ENCODE measurements at regions of chr10 and their contacts with region 1.

Region 1: GRCh38 chr10:97731346-97732051 is 5.4 kb upstream of the ZFYVE27 start:
- DNase-seq: no peak

Region 2: DNA sequence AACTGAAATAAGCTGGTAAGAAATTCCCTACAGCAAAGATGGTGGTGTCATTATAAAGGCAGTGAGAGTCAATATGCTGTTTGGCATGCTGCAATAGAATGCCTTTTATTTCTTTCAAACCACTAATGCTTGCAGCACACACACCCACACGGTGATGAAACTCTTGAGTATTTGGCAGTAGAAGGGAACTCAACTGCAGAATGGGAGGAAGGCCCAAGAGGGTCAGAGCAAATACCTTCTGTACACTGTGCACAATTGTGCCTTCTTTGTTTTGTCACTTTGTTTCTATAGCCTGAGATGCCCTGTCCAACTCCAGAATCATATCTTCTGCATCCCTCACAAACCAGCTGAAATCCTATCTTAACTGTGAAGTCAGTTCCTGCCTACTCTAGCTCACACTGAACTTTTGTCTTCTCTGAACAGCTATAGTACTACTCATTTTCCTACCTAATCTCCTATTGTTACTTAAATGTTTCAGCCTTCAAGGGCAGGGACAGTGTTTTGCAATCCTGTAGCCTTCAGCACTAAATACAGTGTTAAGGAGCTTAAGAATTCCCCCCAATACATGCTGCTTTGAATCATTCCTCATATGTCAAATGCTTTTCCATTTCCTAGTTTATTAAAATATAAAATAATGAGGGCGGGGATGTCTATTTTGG is 255.4 kb before region 1 on chr10:
- intact Hi-C with region 1: no loop called
- DNase-seq: no peak

Region 3: GRCh38 chr10:97676770-97677581 is 54.5 kb before region 1 on chr10:
- intact Hi-C with region 1: loop called (anchors 5 kb)
- DNase-seq: no peak

Region 4: GRCh38 chr10:97708976-97709946 is 22.2 kb before region 1 on chr10:
- intact Hi-C with region 1: loop called (anchors 1 kb)
- DNase-seq: peak; percentile 81

Measured in cardiac septum (tissue), 1 donor.